ENCODE measurements at regions of chr12 and their contacts with region 1.

Region 1: GRCh38 chr12:129821964-129822363 is 81.9 kb downstream of the TMEM132D start:
- DNase-seq: no peak
- ATAC-seq: no peak
- H3K4me3 ChIP-seq: no peak overlapping the region
- H3K27ac ChIP-seq: no peak overlapping the region
- H3K4me1 ChIP-seq: no peaks in the 10 kb centered on the region
- H3K27me3 ChIP-seq: no peaks in the 10 kb centered on the region
- CTCF ChIP-seq: no peak
- POLR2A ChIP-seq: no peak

Region 2: DNA sequence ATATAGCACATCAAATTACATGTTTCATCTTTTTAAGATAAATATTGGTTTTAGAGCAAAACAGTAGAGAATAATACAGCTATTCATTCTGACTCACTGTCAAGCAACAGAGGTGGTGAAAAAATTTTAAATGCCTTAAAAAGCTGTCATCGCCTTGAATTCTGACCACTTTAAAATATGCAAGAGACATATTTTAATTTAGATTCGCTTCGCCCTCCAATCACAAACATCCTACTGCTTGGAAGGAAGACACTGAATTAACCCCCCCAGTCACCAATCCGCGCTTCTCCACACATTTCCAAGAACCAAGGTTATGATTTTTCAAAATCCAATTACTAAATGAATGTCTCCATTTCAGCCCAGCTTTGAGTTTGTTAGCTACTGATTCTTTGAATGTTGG is 30.6 kb before region 1 on chr12:
- in situ Hi-C with region 1: no loop called
- intact Hi-C with region 1: loop called (anchors 1 kb)
- DNase-seq: no peak
- ATAC-seq: no peak
- H3K4me3 ChIP-seq: no peak overlapping the region
- H3K27ac ChIP-seq: no peak overlapping the region
- H3K4me1 ChIP-seq: no peaks in the 10 kb centered on the region
- H3K27me3 ChIP-seq: no peaks in the 10 kb centered on the region
- CTCF ChIP-seq: no peak
- POLR2A ChIP-seq: no peak

Region 3: GRCh38 chr12:129997239-129997638 is 175.3 kb after region 1 on chr12:
- in situ Hi-C with region 1: no loop called
- intact Hi-C with region 1: no loop called
- DNase-seq: no peak
- ATAC-seq: no peak
- H3K4me3 ChIP-seq: no peak overlapping the region
- H3K27ac ChIP-seq: no peak overlapping the region
- H3K4me1 ChIP-seq: no peaks in the 10 kb centered on the region
- H3K27me3 ChIP-seq: no peaks in the 10 kb centered on the region
- CTCF ChIP-seq: no peak
- POLR2A ChIP-seq: no peak

Region 4: GRCh38 chr12:130104571-130105106 is 282.7 kb after region 1 on chr12:
- in situ Hi-C with region 1: no loop called
- intact Hi-C with region 1: no loop called
- DNase-seq: no peak
- ATAC-seq: no peak
- H3K4me3 ChIP-seq: no peak overlapping the region
- H3K27ac ChIP-seq: no peak overlapping the region
- H3K4me1 ChIP-seq: no peaks in the 10 kb centered on the region
- H3K27me3 ChIP-seq: peaks cover 0 to 3% (median 0%) of the 10 kb centered on the region in 3 donors
- CTCF ChIP-seq: no peak
- POLR2A ChIP-seq: no peak

Measured in gastrocnemius medialis (tissue), 4 donors.